ENCODE measurements at regions of chr9 and their contacts with region 1.

Region 1: GRCh38 chr9:26744191-26744965 is 148.2 kb downstream of the CAAP1 start:
- DNase-seq: no peak
- ATAC-seq: no peak
- H3K4me3 ChIP-seq: no peak overlapping the region
- H3K27ac ChIP-seq: no peak overlapping the region
- H3K4me1 ChIP-seq: peaks cover 21% of the 10 kb centered on the region
- H3K27me3 ChIP-seq: no peaks in the 10 kb centered on the region; a peak in 1 of 4 replicates
- CTCF ChIP-seq: peak; percentile 47 to 61 (median 51); a peak in 5 of 6 replicates
- EP300 ChIP-seq: no peak
- POLR2A ChIP-seq: no peak
- RAD21 ChIP-seq: peak; percentile 60; the same call in 1 of the 2 replicates

Region 2: GRCh38 chr9:26723486-26723885 is 20.9 kb before region 1 on chr9:
- CTCF ChIA-PET with region 1: interaction called, 7 read pairs
- POLR2A ChIA-PET with region 1: interaction called, 3 read pairs
- RAD21 ChIA-PET with region 1: interaction called, 11 read pairs
- SMC1A ChIA-PET with region 1: interaction called, 5 read pairs
- in situ Hi-C with region 1: no loop called
- intact Hi-C with region 1: no loop called
- DNase-seq: no peak
- ATAC-seq: peak; percentile 86
- H3K4me3 ChIP-seq: no peak overlapping the region
- H3K27ac ChIP-seq: no peak overlapping the region
- H3K4me1 ChIP-seq: no peaks in the 10 kb centered on the region; the same call in 1 of the 2 replicates
- H3K27me3 ChIP-seq: no peaks in the 10 kb centered on the region
- CTCF ChIP-seq: peak; percentile 52 to 68 (median 55); a peak in 5 of 6 replicates
- EP300 ChIP-seq: no peak
- POLR2A ChIP-seq: no peak
- RAD21 ChIP-seq: peak; percentile 48

Region 3: DNA sequence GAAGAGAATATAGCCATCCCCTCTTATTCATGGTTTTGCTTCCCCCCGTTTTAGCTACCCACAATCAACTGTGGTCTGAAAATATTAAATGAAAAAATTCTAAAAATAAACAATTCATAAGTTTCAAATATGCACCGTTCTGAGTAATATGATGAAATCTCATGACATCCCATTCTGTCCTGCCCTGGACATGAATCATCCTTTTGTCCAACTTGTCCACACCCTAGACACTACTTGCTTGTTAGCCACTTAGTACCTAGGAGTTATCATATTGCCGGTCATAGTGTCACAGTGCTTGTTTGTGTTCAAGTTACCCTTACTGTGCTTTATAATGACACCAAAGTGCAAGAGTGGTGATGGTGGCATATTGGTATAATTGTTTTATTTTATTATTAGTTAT is 34.7 kb after region 1 on chr9:
- CTCF ChIA-PET with region 1: no interaction called
- POLR2A ChIA-PET with region 1: no interaction called
- RAD21 ChIA-PET with region 1: no interaction called
- SMC1A ChIA-PET with region 1: no interaction called
- in situ Hi-C with region 1: no loop called
- intact Hi-C with region 1: no loop called
- DNase-seq: no peak
- ATAC-seq: no peak
- H3K4me3 ChIP-seq: no peak overlapping the region
- H3K27ac ChIP-seq: no peak overlapping the region
- H3K4me1 ChIP-seq: no peaks in the 10 kb centered on the region
- H3K27me3 ChIP-seq: no peaks in the 10 kb centered on the region
- CTCF ChIP-seq: no peak
- EP300 ChIP-seq: no peak
- POLR2A ChIP-seq: no peak
- RAD21 ChIP-seq: no peak

Region 4: GRCh38 chr9:26850995-26851394 is 106.6 kb after region 1 on chr9:
- CTCF ChIA-PET with region 1: interaction called, 41 read pairs
- POLR2A ChIA-PET with region 1: no interaction called
- RAD21 ChIA-PET with region 1: interaction called, 27 read pairs
- SMC1A ChIA-PET with region 1: interaction called, 13 read pairs
- in situ Hi-C with region 1: loop called (anchors 5 kb)
- intact Hi-C with region 1: loop called (anchors 1 kb)
- DNase-seq: no peak
- ATAC-seq: no peak
- H3K4me3 ChIP-seq: no peak overlapping the region
- H3K27ac ChIP-seq: no peak overlapping the region
- H3K4me1 ChIP-seq: no peaks in the 10 kb centered on the region
- H3K27me3 ChIP-seq: no peaks in the 10 kb centered on the region
- CTCF ChIP-seq: no peak
- EP300 ChIP-seq: no peak
- POLR2A ChIP-seq: no peak
- RAD21 ChIP-seq: no peak

Region 5: DNA sequence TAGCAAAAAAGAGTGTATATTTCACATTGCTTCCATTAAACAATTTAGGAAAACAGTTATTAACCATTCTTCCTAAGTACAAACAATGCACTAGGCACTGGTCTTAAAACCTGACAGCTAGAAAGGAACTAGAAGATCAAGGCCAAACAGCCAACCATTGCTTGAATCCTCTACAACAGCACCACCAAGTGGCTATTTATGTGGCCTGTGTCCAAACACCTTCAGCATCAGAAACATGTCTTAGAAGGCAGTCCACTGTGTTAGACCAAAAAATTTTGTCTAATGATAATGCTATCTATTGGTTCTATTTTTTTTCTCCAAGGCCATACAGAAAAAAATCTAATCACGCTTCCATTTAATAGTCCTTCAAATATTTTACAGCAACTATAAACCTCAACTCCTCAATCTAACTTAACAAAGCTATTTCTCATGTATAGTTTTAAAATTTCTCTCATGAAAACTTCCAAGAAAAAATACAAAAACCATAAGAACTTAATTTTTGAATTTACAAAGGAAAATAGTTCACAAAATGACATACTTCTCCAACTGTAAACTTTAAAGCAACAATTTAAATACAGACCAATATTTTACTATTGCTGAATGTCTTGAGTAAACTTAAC is 112.1 kb after region 1 on chr9:
- CTCF ChIA-PET with region 1: interaction called, 41 read pairs
- POLR2A ChIA-PET with region 1: no interaction called
- RAD21 ChIA-PET with region 1: interaction called, 27 read pairs
- SMC1A ChIA-PET with region 1: interaction called, 13 read pairs
- in situ Hi-C with region 1: loop called (anchors 5 kb)
- intact Hi-C with region 1: loop called (anchors 1 kb)
- DNase-seq: peak; percentile 45
- ATAC-seq: peak; percentile 97
- H3K4me3 ChIP-seq: no peak overlapping the region
- H3K27ac ChIP-seq: no peak overlapping the region
- H3K4me1 ChIP-seq: no peaks in the 10 kb centered on the region
- H3K27me3 ChIP-seq: no peaks in the 10 kb centered on the region
- CTCF ChIP-seq: peak; percentile 69 to 72 (median 70)
- EP300 ChIP-seq: no peak
- POLR2A ChIP-seq: no peak
- RAD21 ChIP-seq: peak; percentile 74

Region 6: DNA sequence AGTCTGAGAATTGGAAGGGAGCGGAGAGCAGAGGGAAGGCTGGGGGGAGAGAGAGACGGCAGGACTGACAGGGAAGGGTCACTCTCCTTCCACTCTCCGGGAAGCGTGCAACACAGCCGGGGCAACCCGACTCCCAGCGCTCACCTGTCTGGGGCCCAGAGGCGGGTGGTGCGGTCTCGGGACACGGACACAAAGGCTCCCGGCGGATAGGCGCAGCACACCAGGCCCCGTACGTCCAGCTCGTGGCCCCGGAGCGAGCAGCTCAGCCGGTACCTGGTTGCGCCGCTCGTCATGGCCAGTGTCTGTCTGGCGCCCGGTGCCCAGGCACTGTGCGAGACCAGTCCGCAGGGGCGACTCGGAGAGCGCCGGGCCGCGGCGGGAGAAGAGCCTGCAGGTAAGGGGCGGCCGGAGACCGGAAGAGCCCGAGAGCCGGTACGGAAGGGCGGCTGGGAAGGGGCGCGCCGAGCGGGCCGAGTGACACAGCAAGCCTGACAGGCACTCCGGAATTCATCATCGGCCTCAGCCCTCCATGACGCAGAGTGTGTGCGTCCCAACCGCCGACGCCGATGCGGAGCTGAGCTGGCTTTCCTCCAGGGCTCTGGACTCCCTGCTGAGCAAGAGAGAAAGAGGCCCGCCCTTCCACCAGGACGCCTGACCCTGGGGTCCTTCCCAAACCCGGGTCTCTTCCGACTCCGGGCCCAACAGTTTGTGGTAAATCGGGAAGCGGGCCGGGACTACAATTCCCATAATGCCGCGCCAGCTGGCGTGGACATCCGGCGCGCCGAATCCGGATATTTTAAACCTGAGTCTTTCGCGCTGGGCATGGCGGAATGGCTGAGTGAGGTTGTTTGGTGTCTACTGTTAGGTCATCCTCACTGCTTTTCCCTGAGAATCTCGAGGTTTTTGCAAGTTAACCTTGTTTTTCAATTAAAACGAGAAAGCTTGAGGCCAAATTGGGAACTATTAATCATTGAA is 202.7 kb after region 1 on chr9 and contains the start of gene PLAA:
- CTCF ChIA-PET with region 1: no interaction called
- POLR2A ChIA-PET with region 1: no interaction called
- RAD21 ChIA-PET with region 1: no interaction called
- SMC1A ChIA-PET with region 1: no interaction called
- in situ Hi-C with region 1: no loop called
- intact Hi-C with region 1: loop called (anchors 10 kb)
- DNase-seq: peak; percentile 59
- ATAC-seq: peak; percentile 96
- H3K4me3 ChIP-seq: peak within 1 kb of the TSS; percentile 89
- H3K27ac ChIP-seq: peak within 1 kb of the TSS; percentile 98
- H3K4me1 ChIP-seq: no peaks in the 10 kb centered on the region
- H3K27me3 ChIP-seq: no peaks in the 10 kb centered on the region
- CTCF ChIP-seq: peak; percentile 10 to 28 (median 13); a peak in 1 of 6 replicates
- EP300 ChIP-seq: no peak
- POLR2A ChIP-seq: peak; percentile 87
- RAD21 ChIP-seq: no peak
- polyA plus RNA-seq, gene PLAA: 5.6 to 10.4 TPM

Region 7: GRCh38 chr9:26975693-26976059 is 231.3 kb after region 1 on chr9:
- CTCF ChIA-PET with region 1: interaction called, 6 read pairs
- POLR2A ChIA-PET with region 1: no interaction called
- RAD21 ChIA-PET with region 1: interaction called, 3 read pairs
- SMC1A ChIA-PET with region 1: no interaction called
- in situ Hi-C with region 1: no loop called
- intact Hi-C with region 1: loop called (anchors 10 kb)
- DNase-seq: no peak
- ATAC-seq: no peak; the same call in 2 of the 3 replicates
- H3K4me3 ChIP-seq: no peak overlapping the region
- H3K27ac ChIP-seq: no peak overlapping the region
- H3K4me1 ChIP-seq: no peaks in the 10 kb centered on the region
- H3K27me3 ChIP-seq: no peaks in the 10 kb centered on the region
- CTCF ChIP-seq: peak in 2 of 3 experiments; percentile 31 to 33; a peak in 2 of 6 replicates
- EP300 ChIP-seq: no peak
- POLR2A ChIP-seq: no peak
- RAD21 ChIP-seq: peak; percentile 41

Region 8: GRCh38 chr9:27276193-27277030 is 532.0 kb after region 1 on chr9:
- CTCF ChIA-PET with region 1: interaction called, 3 read pairs
- POLR2A ChIA-PET with region 1: no interaction called
- RAD21 ChIA-PET with region 1: no interaction called
- SMC1A ChIA-PET with region 1: interaction called, 3 read pairs
- in situ Hi-C with region 1: loop called (anchors 10 kb)
- intact Hi-C with region 1: loop called (anchors 5 kb)
- DNase-seq: no peak
- ATAC-seq: peak; percentile 72
- H3K4me3 ChIP-seq: no peak overlapping the region
- H3K27ac ChIP-seq: no peak overlapping the region
- H3K4me1 ChIP-seq: no peaks in the 10 kb centered on the region
- H3K27me3 ChIP-seq: no peaks in the 10 kb centered on the region
- CTCF ChIP-seq: peak; percentile 49 to 66 (median 64); a peak in 5 of 6 replicates
- EP300 ChIP-seq: no peak
- POLR2A ChIP-seq: no peak
- RAD21 ChIP-seq: peak; percentile 81

Measured in GM12878 (cell line).